CD8-positive, alpha-beta T cell (primary cell): ENCODE measurements at regions of chr20 and their contacts with region 1.

Region 1: GRCh38 chr20:13771853-13772453 is 12.8 kb downstream of the ESF1 start:
- DNase-seq: peak in 1 of 9 experiments; percentile 32
- ATAC-seq: no peak
- H3K4me3 ChIP-seq: no peak overlapping the region
- H3K4me3 Mint-ChIP-seq: no peak overlapping the region
- H3K27ac ChIP-seq: no peak overlapping the region
- H3K27ac Mint-ChIP-seq: no peak overlapping the region
- H3K4me1 ChIP-seq: no peaks in the 10 kb centered on the region
- H3K4me1 Mint-ChIP-seq: peaks cover 8% of the 10 kb centered on the region
- H3K27me3 ChIP-seq: no peaks in the 10 kb centered on the region
- H3K27me3 Mint-ChIP-seq: no peaks in the 10 kb centered on the region
- CTCF ChIP-seq: peak; percentile 70

Region 2: GRCh38 chr20:13458860-13459451 is 313.0 kb before region 1 on chr20:
- CTCF ChIA-PET with region 1: no interaction called
- POLR2A ChIA-PET with region 1: no interaction called
- intact Hi-C with region 1: loop called in 1 of 2 experiments (anchors 2 kb)
- DNase-seq: peak in 2 of 9 experiments; percentile 20 to 33
- ATAC-seq: no peak
- H3K4me3 ChIP-seq: no peak overlapping the region
- H3K4me3 Mint-ChIP-seq: no peak overlapping the region
- H3K27ac ChIP-seq: no peak overlapping the region
- H3K27ac Mint-ChIP-seq: no peak overlapping the region
- H3K4me1 ChIP-seq: no peaks in the 10 kb centered on the region
- H3K4me1 Mint-ChIP-seq: no peaks in the 10 kb centered on the region
- H3K27me3 ChIP-seq: no peaks in the 10 kb centered on the region
- H3K27me3 Mint-ChIP-seq: no peaks in the 10 kb centered on the region
- CTCF ChIP-seq: peak; percentile 52

Region 3: DNA sequence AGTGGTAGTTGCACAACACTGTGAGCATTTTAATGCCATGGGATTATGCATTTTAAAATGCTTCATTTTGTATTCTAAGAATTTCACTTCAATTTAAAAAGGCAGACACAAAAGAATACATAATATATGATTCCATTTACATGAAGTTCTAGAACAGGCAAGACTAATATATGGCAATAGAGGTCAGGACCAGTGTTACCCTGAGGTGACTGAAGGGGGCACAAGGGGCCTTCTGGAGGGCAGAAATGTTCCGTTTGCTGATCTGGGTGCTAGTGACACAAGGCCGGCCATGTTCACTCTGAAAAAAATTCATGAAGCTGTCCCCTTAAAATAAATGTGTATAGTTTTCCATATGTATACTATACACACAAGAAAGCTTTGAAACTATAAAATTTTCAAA is 161.8 kb before region 1 on chr20:
- CTCF ChIA-PET with region 1: interaction called, 3 read pairs
- POLR2A ChIA-PET with region 1: no interaction called
- intact Hi-C with region 1: loop called in 1 of 2 experiments (anchors 1 kb)
- DNase-seq: peak in 2 of 9 experiments; percentile 8 to 28
- ATAC-seq: no peak
- H3K4me3 ChIP-seq: no peak overlapping the region
- H3K4me3 Mint-ChIP-seq: no peak overlapping the region
- H3K27ac ChIP-seq: no peak overlapping the region
- H3K27ac Mint-ChIP-seq: no peak overlapping the region
- H3K4me1 ChIP-seq: no peaks in the 10 kb centered on the region
- H3K4me1 Mint-ChIP-seq: peaks cover 2% of the 10 kb centered on the region
- H3K27me3 ChIP-seq: no peaks in the 10 kb centered on the region
- H3K27me3 Mint-ChIP-seq: no peaks in the 10 kb centered on the region
- CTCF ChIP-seq: peak; percentile 10

Region 4: DNA sequence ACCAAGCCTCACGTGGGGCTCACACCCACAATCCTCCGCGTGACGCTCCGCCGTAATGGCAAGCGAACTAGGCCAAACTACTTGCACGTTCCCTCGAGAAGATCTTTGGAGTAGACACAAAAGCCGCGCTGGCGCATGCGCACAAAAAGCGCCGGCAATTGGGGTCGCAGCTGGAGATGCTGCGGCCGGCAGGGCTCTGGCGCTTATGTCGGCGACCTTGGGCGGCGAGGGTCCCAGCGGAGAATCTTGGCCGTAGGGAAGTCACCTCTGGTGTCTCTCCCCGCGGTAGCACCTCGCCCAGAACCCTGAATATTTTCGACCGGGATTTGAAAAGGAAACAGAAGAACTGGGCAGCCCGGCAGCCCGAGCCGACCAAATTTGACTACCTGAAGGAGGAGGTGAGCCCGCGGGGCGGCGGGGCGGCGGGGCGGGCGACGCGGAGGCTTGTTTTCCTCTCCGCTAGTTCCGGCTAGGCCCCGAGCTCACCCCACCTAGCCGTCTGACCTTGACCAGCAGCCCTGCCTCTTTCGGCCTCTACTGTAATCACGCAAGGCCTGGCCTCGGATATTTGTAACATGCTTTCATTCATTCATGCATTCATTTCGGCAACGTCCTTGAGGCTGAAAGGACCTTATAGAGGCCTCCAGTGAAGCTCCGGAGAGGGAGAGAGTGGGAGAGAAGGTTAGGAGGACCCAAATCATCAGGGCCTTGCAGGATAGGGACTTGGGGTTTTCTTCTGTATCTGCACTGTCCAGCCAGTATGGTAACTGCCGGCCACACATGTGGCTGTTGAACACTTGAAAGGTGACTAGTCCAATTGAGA is 13.2 kb after region 1 on chr20 and contains the starts of genes ESF1 and NDUFAF5:
- CTCF ChIA-PET with region 1: interaction called, 17 read pairs
- POLR2A ChIA-PET with region 1: interaction called, 4 read pairs
- intact Hi-C with region 1: no loop called
- DNase-seq: peak; percentile 82 to 96 (median 91)
- ATAC-seq: peak; percentile 96
- H3K4me3 ChIP-seq: peak within 1 kb of the TSS; percentile 74 to 84
- H3K4me3 Mint-ChIP-seq: peak within 1 kb of the TSS; percentile 98
- H3K27ac ChIP-seq: peak within 1 kb of the TSS; percentile 77 to 87
- H3K27ac Mint-ChIP-seq: peak within 1 kb of the TSS; percentile 98
- H3K4me1 ChIP-seq: peaks cover 23% of the 10 kb centered on the region
- H3K4me1 Mint-ChIP-seq: peaks cover 60% of the 10 kb centered on the region
- H3K27me3 ChIP-seq: no peaks in the 10 kb centered on the region
- H3K27me3 Mint-ChIP-seq: no peaks in the 10 kb centered on the region
- CTCF ChIP-seq: no peak
- total RNA-seq, gene ESF1: 7.9 to 8.8 TPM
- total RNA-seq, gene NDUFAF5: 78.6 to 92.1 TPM